T-cell (primary cell): ENCODE measurements at regions of chr9 and their contacts with region 1.

Region 1: GRCh38 chr9:123798195-123798594 is 131.7 kb downstream of the DENND1A start:
- DNase-seq: no peak
- ATAC-seq: no peak
- H3K4me3 ChIP-seq: no peak overlapping the region
- H3K4me3 Mint-ChIP-seq: no peak overlapping the region
- H3K27ac ChIP-seq: no peak overlapping the region
- H3K27ac Mint-ChIP-seq: no peak overlapping the region
- H3K4me1 ChIP-seq: no peaks in the 10 kb centered on the region
- H3K4me1 Mint-ChIP-seq: peaks cover 12 to 17% (median 16%) of the 10 kb centered on the region in 3 donors
- H3K27me3 ChIP-seq: no peaks in the 10 kb centered on the region
- H3K27me3 Mint-ChIP-seq: no peaks in the 10 kb centered on the region

Region 2: GRCh38 chr9:123622711-123623241 is 175.4 kb before region 1 on chr9:
- CTCF ChIA-PET with region 1: no interaction called
- POLR2A ChIA-PET with region 1: interaction called in 1 of 2 experiments, 12 read pairs
- DNase-seq: no peak
- ATAC-seq: no peak
- H3K4me3 ChIP-seq: no peak overlapping the region
- H3K4me3 Mint-ChIP-seq: no peak overlapping the region
- H3K27ac ChIP-seq: no peak overlapping the region
- H3K27ac Mint-ChIP-seq: no peak overlapping the region
- H3K4me1 ChIP-seq: no peaks in the 10 kb centered on the region
- H3K4me1 Mint-ChIP-seq: no peaks in the 10 kb centered on the region
- H3K27me3 ChIP-seq: no peaks in the 10 kb centered on the region
- H3K27me3 Mint-ChIP-seq: no peaks in the 10 kb centered on the region

Region 3: GRCh38 chr9:123763910-123764588 is 34.1 kb before region 1 on chr9:
- CTCF ChIA-PET with region 1: no interaction called
- POLR2A ChIA-PET with region 1: no interaction called
- DNase-seq: no peak
- ATAC-seq: no peak
- H3K4me3 ChIP-seq: no peak overlapping the region
- H3K4me3 Mint-ChIP-seq: no peak overlapping the region
- H3K27ac ChIP-seq: no peak overlapping the region
- H3K27ac Mint-ChIP-seq: no peak overlapping the region
- H3K4me1 ChIP-seq: no peaks in the 10 kb centered on the region
- H3K4me1 Mint-ChIP-seq: no peaks in the 10 kb centered on the region
- H3K27me3 ChIP-seq: no peaks in the 10 kb centered on the region
- H3K27me3 Mint-ChIP-seq: no peaks in the 10 kb centered on the region

Region 4: GRCh38 chr9:123775289-123776284 is 22.6 kb before region 1 on chr9:
- CTCF ChIA-PET with region 1: no interaction called
- POLR2A ChIA-PET with region 1: no interaction called
- DNase-seq: peak in 3 of 35 experiments; percentile 1 to 7 (median 2)
- ATAC-seq: no peak
- H3K4me3 ChIP-seq: no peak overlapping the region
- H3K4me3 Mint-ChIP-seq: no peak overlapping the region
- H3K27ac ChIP-seq: no peak overlapping the region
- H3K27ac Mint-ChIP-seq: no peak overlapping the region
- H3K4me1 ChIP-seq: peaks cover 0 to 3% of the 10 kb centered on the region in 2 experiments
- H3K4me1 Mint-ChIP-seq: peaks cover 0 to 14% (median 8%) of the 10 kb centered on the region in 3 donors
- H3K27me3 ChIP-seq: no peaks in the 10 kb centered on the region
- H3K27me3 Mint-ChIP-seq: no peaks in the 10 kb centered on the region

Region 5: GRCh38 chr9:123787416-123787815 is 10.8 kb before region 1 on chr9:
- CTCF ChIA-PET with region 1: no interaction called
- POLR2A ChIA-PET with region 1: no interaction called
- DNase-seq: no peak
- ATAC-seq: no peak
- H3K4me3 ChIP-seq: no peak overlapping the region
- H3K4me3 Mint-ChIP-seq: no peak overlapping the region
- H3K27ac ChIP-seq: no peak overlapping the region
- H3K27ac Mint-ChIP-seq: no peak overlapping the region
- H3K4me1 ChIP-seq: no peaks in the 10 kb centered on the region
- H3K4me1 Mint-ChIP-seq: no peaks in the 10 kb centered on the region
- H3K27me3 ChIP-seq: no peaks in the 10 kb centered on the region
- H3K27me3 Mint-ChIP-seq: no peaks in the 10 kb centered on the region